ENCODE measurements at regions of chr5 and their contacts with region 1.

Region 1: DNA sequence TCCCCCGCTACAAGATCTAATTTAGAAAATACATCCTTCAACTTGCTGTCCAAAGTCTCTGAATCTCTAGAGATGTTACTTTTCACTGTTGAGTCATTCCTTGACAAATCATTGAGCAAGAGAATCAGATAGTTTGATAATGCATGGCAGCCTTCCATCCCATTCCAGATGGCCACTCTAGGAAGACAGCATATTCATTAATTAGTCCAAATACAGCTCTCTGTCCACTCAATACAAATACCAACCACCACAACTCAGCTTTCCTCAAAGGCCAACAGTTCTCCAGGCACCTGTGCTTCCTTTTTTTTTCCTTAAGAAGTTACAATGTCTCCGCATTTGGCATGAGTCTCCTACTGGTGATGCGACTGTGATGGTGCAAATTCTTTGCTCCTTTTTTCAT is 72.3 kb downstream of the DROSHA start:
- DNase-seq: no peak
- ATAC-seq: no peak
- H3K4me3 ChIP-seq: no peak overlapping the region
- H3K4me3 Mint-ChIP-seq: no peak overlapping the region
- H3K27ac ChIP-seq: no peak overlapping the region
- H3K27ac Mint-ChIP-seq: no peak overlapping the region
- H3K4me1 ChIP-seq: no peaks in the 10 kb centered on the region
- H3K4me1 Mint-ChIP-seq: no peaks in the 10 kb centered on the region
- H3K27me3 ChIP-seq: no peaks in the 10 kb centered on the region
- H3K27me3 Mint-ChIP-seq: no peaks in the 10 kb centered on the region
- CTCF ChIP-seq: no peak

Region 2: GRCh38 chr5:31021181-31021624 is 438.4 kb before region 1 on chr5:
- CTCF ChIA-PET with region 1: no interaction called
- POLR2A ChIA-PET with region 1: no interaction called
- intact Hi-C with region 1: no loop called
- DNase-seq: no peak
- ATAC-seq: no peak
- H3K4me3 ChIP-seq: no peak overlapping the region
- H3K4me3 Mint-ChIP-seq: no peak overlapping the region
- H3K27ac ChIP-seq: no peak overlapping the region
- H3K27ac Mint-ChIP-seq: no peak overlapping the region
- H3K4me1 ChIP-seq: no peaks in the 10 kb centered on the region
- H3K4me1 Mint-ChIP-seq: no peaks in the 10 kb centered on the region
- H3K27me3 ChIP-seq: no peaks in the 10 kb centered on the region
- H3K27me3 Mint-ChIP-seq: no peaks in the 10 kb centered on the region
- CTCF ChIP-seq: no peak

Region 3: DNA sequence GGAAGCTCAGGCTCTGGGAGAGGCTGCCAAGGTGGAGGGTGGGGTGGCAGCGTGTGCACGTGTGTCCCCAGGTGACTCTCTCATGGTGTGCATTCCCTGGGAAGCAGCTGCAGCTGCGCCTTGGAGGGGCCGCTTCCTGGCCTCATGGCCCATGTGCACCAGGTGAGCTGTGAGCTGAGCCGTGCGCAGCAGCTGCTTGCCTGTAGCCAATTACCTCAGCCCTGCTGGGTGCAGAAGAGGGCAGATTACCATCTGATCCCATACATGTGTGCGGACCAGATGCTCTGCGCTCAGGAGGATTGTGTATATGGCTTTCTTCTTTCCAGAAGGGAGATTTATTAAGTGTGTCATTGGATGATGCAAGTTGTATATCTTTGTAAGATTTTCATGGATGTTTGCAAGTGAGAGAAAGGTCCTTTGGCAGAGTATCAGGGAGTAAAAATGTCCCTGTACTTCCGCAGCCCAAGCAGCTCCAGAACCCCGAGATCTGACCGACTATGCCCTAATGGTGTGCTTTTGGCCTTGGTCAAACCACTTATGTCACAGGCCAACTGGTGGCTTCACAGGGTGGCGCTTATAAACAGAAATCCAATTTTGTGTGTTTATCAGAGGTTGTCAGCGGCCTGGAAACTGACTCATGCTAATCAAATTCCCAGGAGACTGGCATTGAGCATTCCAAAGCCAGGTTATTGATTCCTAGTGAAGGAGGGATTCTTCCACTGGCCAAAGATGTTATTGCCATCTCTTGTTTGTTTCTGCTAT is 485.3 kb after region 1 on chr5:
- CTCF ChIA-PET with region 1: no interaction called
- POLR2A ChIA-PET with region 1: no interaction called
- intact Hi-C with region 1: loop called in 1 of 2 experiments (anchors 5 kb)
- DNase-seq: no peak
- ATAC-seq: no peak
- H3K4me3 ChIP-seq: no peak overlapping the region
- H3K4me3 Mint-ChIP-seq: no peak overlapping the region
- H3K27ac ChIP-seq: no peak overlapping the region
- H3K27ac Mint-ChIP-seq: no peak overlapping the region
- H3K4me1 ChIP-seq: no peaks in the 10 kb centered on the region
- H3K4me1 Mint-ChIP-seq: no peaks in the 10 kb centered on the region
- H3K27me3 ChIP-seq: no peaks in the 10 kb centered on the region
- H3K27me3 Mint-ChIP-seq: no peaks in the 10 kb centered on the region
- CTCF ChIP-seq: no peak

Measured in CD8-positive, alpha-beta T cell (primary cell).